ENCODE measurements at regions of chr9 and their contacts with region 1.

Region 1: GRCh38 chr9:35675732-35676392 is 2.1 kb downstream of the CA9 start:
- DNase-seq: peak; percentile 37 to 46 (median 46)
- H3K4me3 ChIP-seq: peak overlapping the region; percentile 15 to 81 (median 47)
- H3K27ac ChIP-seq: no peak overlapping the region
- H3K4me1 ChIP-seq: peaks cover 0 to 12% (median 8%) of the 10 kb centered on the region in 4 experiments
- H3K27me3 ChIP-seq: peaks cover 0 to 4% (median 0%) of the 10 kb centered on the region in 5 experiments

Region 2: GRCh38 chr9:35664531-35665470 is 11.1 kb before region 1 on chr9 and contains the start of gene ARHGEF39:
- CTCF ChIA-PET with region 1: interaction called, 16 read pairs
- POLR2A ChIA-PET with region 1: no interaction called
- DNase-seq: peak; percentile 51 to 68 (median 57)
- H3K4me3 ChIP-seq: peak within 1 kb of the TSS; percentile 64 to 88 (median 81)
- H3K27ac ChIP-seq: peak within 1 kb of the TSS in 1 of 2 experiments; percentile 70
- H3K4me1 ChIP-seq: peaks cover 12 to 55% (median 36%) of the 10 kb centered on the region in 4 experiments
- H3K27me3 ChIP-seq: no peaks in the 10 kb centered on the region